ENCODE measurements at regions of chr21 and their contacts with region 1.

Region 1: GRCh38 chr21:14591882-14592281 is 45.8 kb upstream of the SAMSN1 start:
- DNase-seq: no peak
- H3K4me3 ChIP-seq: no peak overlapping the region
- H3K27ac ChIP-seq: no peak overlapping the region
- H3K4me1 ChIP-seq: no peaks in the 10 kb centered on the region
- CTCF ChIP-seq: no peak

Region 2: DNA sequence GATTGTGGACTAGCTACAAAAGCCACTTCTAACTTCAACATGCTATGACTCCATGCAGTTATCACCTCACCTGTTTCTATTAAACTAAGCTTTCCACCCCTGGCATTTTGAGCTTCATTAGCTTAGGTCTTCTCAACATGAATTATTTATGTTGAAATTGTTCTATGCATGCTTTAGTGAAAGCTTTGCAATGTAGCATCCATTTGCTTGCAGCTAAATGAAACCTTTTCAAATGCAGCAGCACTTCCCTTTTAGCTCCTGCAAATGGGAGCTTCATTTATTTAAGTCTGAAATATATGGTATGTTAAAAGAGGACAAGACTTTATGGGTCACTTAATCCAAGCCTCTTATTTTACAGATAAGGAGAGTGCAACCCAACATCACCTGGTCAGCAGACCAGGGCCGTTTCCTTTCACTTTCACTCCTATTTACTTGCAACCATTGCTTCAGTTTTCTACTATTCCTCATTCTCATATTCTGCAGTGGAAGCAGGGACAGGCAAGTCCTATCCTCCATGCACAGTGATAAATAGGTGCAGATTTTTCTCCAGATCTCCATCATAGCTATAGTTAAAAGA is 10.6 kb after region 1 on chr21:
- CTCF ChIA-PET with region 1: no interaction called
- POLR2A ChIA-PET with region 1: interaction called, 19 read pairs
- intact Hi-C with region 1: no loop called
- DNase-seq: peak; percentile 8
- H3K4me3 ChIP-seq: no peak overlapping the region
- H3K27ac ChIP-seq: no peak overlapping the region
- H3K4me1 ChIP-seq: peaks cover 6% of the 10 kb centered on the region
- CTCF ChIP-seq: no peak